Aorta (tissue), 5 donors: ENCODE measurements at regions of chr17 and their contacts with region 1.

Region 1: GRCh38 chr17:16285957-16286640 is 67.2 kb downstream of the CENPV start:
- DNase-seq: peak; percentile 92
- ATAC-seq: peak; percentile 94
- H3K4me3 ChIP-seq: peak overlapping the region in 1 of 2 donors; percentile 1
- H3K27ac ChIP-seq: peak overlapping the region; percentile 99 to 100
- H3K4me1 ChIP-seq: no peaks in the 10 kb centered on the region
- H3K27me3 ChIP-seq: no peaks in the 10 kb centered on the region

Region 2: DNA sequence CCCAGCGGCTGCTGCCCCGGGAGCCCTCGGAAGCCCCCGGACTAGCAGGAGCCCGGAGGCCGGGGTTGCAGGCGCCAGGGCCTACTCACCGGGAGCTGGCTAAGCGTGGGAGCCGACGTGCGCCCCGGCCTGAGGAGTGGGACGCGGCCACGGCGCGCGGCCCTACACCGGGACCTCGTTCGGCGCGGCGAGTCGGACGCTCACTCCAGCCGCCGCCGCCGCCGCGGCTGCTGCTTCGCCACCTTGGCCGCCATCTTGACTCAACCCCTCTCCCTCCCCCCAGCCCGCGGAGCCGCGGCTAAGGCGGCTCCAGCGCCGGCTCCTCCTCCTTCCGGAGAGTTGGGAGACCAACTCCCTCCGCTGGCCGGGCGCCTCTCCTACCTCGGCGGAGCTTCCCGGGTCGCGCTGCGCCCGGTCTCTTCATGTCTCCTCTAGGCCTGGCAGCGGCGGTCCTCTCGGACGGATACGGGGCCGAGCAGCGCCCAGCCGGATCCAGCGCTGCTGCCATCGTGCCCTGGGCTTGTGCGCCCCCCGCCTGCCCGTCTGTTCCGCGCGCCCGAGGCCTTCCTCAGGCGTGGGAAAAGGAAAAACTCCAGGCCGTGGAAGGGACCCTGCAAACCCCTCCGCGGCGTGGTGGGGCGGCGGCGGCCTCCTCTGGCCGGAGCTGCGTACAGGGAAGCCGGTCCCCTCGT is 70.7 kb before region 1 on chr17 and contains the start of gene NCOR1:
- intact Hi-C with region 1: loop called (anchors 2 to 5 kb)
- DNase-seq: peak; percentile 96 to 97
- ATAC-seq: peak; percentile 97
- H3K4me3 ChIP-seq: peak within 1 kb of the TSS; percentile 71 to 83
- H3K27ac ChIP-seq: peak within 1 kb of the TSS; percentile 50 to 82
- H3K4me1 ChIP-seq: peaks cover 0 to 5% of the 10 kb centered on the region in 2 donors
- H3K27me3 ChIP-seq: no peaks in the 10 kb centered on the region
- total RNA-seq, gene NCOR1: 134 to 144 TPM

Region 3: GRCh38 chr17:16353317-16354174 is 67.4 kb after region 1 on chr17 and contains the start of gene CENPV:
- intact Hi-C with region 1: loop called in 1 of 2 experiments (anchors 5 kb)
- DNase-seq: peak; percentile 50 to 81
- ATAC-seq: peak; percentile 52
- H3K4me3 ChIP-seq: peak within 1 kb of the TSS; percentile 61 to 88
- H3K27ac ChIP-seq: no peak within 1 kb of the TSS
- H3K4me1 ChIP-seq: peaks cover 0 to 4% of the 10 kb centered on the region in 2 donors
- H3K27me3 ChIP-seq: no peaks in the 10 kb centered on the region
- total RNA-seq, gene CENPV: 9.5 to 24.8 TPM

Region 4: DNA sequence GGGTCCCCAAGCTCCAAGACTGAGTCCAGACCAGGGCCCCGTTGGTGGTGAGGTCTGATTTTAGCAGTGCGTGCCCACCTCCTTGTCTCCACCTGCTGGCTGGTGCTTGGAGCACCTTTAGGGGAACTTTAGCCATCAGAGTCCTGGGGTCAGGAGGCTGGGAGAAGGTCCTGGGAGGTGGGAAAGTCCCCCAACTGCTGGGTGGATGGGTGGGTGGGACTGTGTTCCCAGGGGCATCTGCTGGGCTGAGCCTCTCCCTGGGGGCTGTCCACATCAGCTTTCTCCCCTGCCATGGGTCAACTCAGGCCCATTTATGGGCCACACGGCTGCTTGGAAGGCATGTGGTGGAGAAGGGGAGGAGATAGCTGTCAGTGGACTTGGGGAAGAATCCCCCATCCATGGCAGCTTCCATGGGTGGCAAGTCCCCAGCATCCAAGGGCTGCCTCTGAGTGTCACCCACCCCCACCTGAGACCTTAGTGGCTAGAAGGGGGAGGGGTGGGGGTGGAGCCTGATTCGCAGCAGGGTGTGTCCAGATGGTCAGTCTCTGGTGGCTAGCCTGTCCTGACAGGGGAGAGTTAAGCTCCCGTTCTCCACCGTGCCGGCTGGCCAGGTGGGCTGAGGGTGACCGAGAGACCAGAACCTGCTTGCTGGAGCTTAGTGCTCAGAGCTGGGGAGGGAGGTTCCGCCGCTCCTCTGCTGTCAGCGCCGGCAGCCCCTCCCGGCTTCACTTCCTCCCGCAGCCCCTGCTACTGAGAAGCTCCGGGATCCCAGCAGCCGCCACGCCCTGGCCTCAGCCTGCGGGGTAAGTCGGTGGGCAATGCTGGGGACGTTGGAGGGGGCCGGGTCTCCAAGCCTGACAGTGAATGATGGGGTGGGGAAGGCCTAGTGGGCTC is 129.2 kb after region 1 on chr17 and contains the start of gene TRPV2:
- intact Hi-C with region 1: loop called in 1 of 2 experiments (anchors 10 kb)
- DNase-seq: no peak
- ATAC-seq: no peak
- H3K4me3 ChIP-seq: peak within 1 kb of the TSS; percentile 1 to 3
- H3K27ac ChIP-seq: peak within 1 kb of the TSS in 1 of 2 donors; percentile 20
- H3K4me1 ChIP-seq: no peaks in the 10 kb centered on the region
- H3K27me3 ChIP-seq: no peaks in the 10 kb centered on the region
- total RNA-seq, gene TRPV2: 33.4 to 40.3 TPM